Heart left ventricle (tissue), 16 donors: ENCODE measurements at regions of chr4 and their contacts with region 1.

Region 1: DNA sequence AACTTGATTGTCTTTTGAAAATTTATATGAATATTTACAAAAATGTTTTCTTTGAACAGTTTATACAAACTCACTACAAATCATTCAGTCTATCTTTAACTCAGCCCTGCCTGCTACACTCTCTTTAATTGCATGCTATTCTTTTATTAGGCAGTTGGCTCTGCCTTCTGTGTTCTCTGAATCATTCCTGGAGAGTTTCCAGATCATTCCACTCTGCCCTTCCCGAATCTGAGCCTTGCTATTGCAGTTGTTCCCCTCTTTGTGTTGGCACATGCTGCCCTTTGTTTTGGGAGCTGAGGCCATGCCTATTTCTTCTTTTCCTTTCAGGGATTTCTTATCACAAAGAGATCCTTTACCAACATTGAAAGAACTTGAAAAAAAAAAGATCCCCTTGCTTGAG is 8.7 kb upstream of the TECRL start:
- DNase-seq: peak in 4 of 5 donors; percentile 43 to 66 (median 48)
- ATAC-seq: peak; percentile 91 to 96 (median 94)
- H3K4me3 ChIP-seq: no peak overlapping the region
- H3K27ac ChIP-seq: peak overlapping the region in 11 of 12 donors; percentile 13 to 83 (median 70)
- H3K4me1 ChIP-seq: peaks cover 0 to 11% (median 0%) of the 10 kb centered on the region in 12 donors
- H3K27me3 ChIP-seq: no peaks in the 10 kb centered on the region
- CTCF ChIP-seq: no peak
- POLR2A ChIP-seq: no peak

Region 2: GRCh38 chr4:64266669-64267068 is 151.3 kb before region 1 on chr4:
- intact Hi-C with region 1: no loop called
- DNase-seq: no peak
- ATAC-seq: peak in 2 of 4 donors; percentile 14 to 43
- H3K4me3 ChIP-seq: no peak overlapping the region
- H3K27ac ChIP-seq: no peak overlapping the region
- H3K4me1 ChIP-seq: peaks cover 0 to 12% (median 0%) of the 10 kb centered on the region in 12 donors
- H3K27me3 ChIP-seq: no peaks in the 10 kb centered on the region
- CTCF ChIP-seq: no peak
- POLR2A ChIP-seq: no peak

Region 3: GRCh38 chr4:64465263-64465662 is 47.3 kb after region 1 on chr4:
- intact Hi-C with region 1: loop called in 3 of 10 experiments (anchors 5 to 10 kb)
- DNase-seq: no peak
- ATAC-seq: peak; percentile 26 to 68 (median 44)
- H3K4me3 ChIP-seq: no peak overlapping the region
- H3K27ac ChIP-seq: no peak overlapping the region
- H3K4me1 ChIP-seq: peaks cover 0 to 5% (median 0%) of the 10 kb centered on the region in 12 donors
- H3K27me3 ChIP-seq: no peaks in the 10 kb centered on the region
- CTCF ChIP-seq: no peak
- POLR2A ChIP-seq: no peak

Region 4: GRCh38 chr4:64479338-64479737 is 61.4 kb after region 1 on chr4:
- intact Hi-C with region 1: loop called in 4 of 10 experiments (anchors 5 to 10 kb)
- DNase-seq: no peak
- ATAC-seq: no peak
- H3K4me3 ChIP-seq: no peak overlapping the region
- H3K27ac ChIP-seq: no peak overlapping the region
- H3K4me1 ChIP-seq: peaks cover 0 to 3% (median 0%) of the 10 kb centered on the region in 12 donors
- H3K27me3 ChIP-seq: no peaks in the 10 kb centered on the region
- CTCF ChIP-seq: no peak
- POLR2A ChIP-seq: no peak

Region 5: DNA sequence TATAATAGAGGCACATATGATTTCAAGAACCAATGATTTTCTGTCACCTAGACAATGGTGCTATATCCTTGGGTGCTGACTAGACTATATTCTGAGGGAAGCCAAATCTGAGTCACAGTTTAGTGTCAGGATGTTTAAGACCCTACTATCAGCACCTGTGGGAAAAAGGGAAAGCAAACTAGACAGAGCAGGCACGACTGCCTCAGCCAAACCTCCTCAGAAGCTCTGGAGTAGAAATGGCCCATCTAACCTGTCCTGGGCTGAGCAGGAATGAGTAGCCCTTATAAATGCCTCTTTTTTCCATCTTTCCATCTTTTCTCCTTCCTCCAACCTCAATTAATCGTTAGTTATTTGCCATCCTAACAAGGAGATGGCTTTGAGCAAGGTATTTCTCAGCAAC is 71.7 kb after region 1 on chr4:
- intact Hi-C with region 1: loop called in 4 of 10 experiments (anchors 5 to 10 kb)
- DNase-seq: no peak
- ATAC-seq: peak in 3 of 4 donors; percentile 28 to 52 (median 39)
- H3K4me3 ChIP-seq: peak overlapping the region in 1 of 12 donors; percentile 11
- H3K27ac ChIP-seq: peak overlapping the region in 5 of 12 donors; percentile 10 to 60 (median 42)
- H3K4me1 ChIP-seq: no peaks in the 10 kb centered on the region
- H3K27me3 ChIP-seq: no peaks in the 10 kb centered on the region
- CTCF ChIP-seq: no peak
- POLR2A ChIP-seq: no peak

Region 6: DNA sequence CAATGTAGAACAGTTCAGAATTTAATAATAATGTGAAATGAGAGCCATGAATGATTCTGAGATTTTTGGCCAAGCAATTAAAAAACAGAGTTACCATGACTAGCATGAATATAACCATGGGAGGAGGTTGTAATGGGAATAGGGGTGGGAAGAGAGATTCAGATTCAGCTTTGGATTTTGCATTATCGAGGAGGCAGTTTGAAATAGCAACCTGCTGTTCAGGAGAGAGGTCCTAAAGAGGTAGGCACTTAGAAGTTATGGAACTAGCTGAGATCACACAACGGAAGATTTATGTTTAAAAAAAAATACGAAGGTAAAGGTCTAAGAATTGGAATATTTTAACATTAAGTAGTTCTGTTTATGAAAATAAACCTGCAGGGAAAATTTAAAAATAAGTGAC is 115.7 kb after region 1 on chr4:
- intact Hi-C with region 1: loop called in 2 of 10 experiments (anchors 5 kb)
- DNase-seq: no peak
- ATAC-seq: peak in 2 of 4 donors; percentile 24 to 44
- H3K4me3 ChIP-seq: peak overlapping the region in 3 of 12 donors; percentile 17 to 31 (median 26)
- H3K27ac ChIP-seq: peak overlapping the region in 8 of 12 donors; percentile 19 to 59 (median 44)
- H3K4me1 ChIP-seq: peaks cover 0 to 3% (median 0%) of the 10 kb centered on the region in 12 donors
- H3K27me3 ChIP-seq: no peaks in the 10 kb centered on the region
- CTCF ChIP-seq: no peak
- POLR2A ChIP-seq: no peak